ENCODE measurements at regions of chr3 and their contacts with region 1.

Region 1: DNA sequence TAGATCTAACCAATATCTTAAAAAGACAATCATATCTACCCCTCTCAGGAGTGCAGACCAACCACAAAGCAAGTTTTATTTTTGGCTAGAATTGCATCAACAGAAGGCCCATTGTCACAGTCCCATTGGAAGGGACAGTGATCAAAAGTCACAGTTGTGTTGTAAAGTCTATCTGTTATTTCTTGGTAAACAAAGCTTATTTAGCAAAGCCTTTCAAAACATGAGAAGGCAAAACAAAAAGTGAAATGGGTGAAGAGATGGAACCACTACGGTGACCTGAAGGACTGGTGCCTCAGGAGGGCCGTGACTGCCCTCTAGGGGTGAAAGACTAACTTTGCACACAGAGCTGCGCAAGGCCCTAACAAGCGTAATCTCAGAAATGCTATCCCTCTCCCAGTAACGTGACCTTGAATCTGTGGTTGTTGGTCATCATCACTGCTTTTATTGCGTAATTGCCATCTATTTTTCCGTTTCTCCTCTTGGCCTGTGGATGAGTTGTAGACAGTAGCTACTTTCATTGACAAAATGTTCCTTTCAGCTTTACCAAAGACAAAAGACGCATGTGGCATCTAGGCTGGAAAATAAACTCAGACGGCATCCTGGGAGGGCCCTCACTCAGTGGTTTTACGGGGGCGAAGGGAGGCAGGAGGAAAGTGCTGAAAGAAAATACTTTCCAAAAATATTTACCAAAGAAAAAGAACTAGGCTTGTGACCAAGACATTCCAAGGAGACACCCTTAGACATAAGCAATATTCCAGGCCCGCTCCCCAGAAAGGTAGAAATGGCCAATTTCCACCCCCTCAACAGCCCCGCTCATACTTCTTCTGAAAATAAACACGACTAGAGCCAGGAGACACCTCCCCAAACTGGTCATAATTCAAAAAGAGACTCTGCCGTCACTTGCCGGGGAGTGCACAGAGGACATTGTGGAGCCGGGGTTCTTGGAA is 79.4 kb downstream of the FRMD4B start:
- DNase-seq: peak; percentile 85
- H3K4me3 ChIP-seq: no peak overlapping the region
- H3K27ac ChIP-seq: no peak overlapping the region
- H3K4me1 ChIP-seq: peaks cover 12% of the 10 kb centered on the region
- H3K27me3 ChIP-seq: no peaks in the 10 kb centered on the region
- CTCF ChIP-seq: peak; percentile 89 to 92
- POLR2A ChIP-seq: no peak

Region 2: GRCh38 chr3:69129531-69129930 is 177.0 kb before region 1 on chr3:
- CTCF ChIA-PET with region 1: interaction called, 16 read pairs
- POLR2A ChIA-PET with region 1: no interaction called
- dilution Hi-C with region 1: no loop called
- intact Hi-C with region 1: no loop called
- DNase-seq: no peak
- H3K4me3 ChIP-seq: no peak overlapping the region
- H3K27ac ChIP-seq: no peak overlapping the region
- H3K4me1 ChIP-seq: no peaks in the 10 kb centered on the region
- H3K27me3 ChIP-seq: no peaks in the 10 kb centered on the region
- CTCF ChIP-seq: no peak
- POLR2A ChIP-seq: no peak

Region 3: GRCh38 chr3:69200384-69201068 is 106.0 kb before region 1 on chr3:
- CTCF ChIA-PET with region 1: interaction called, 17 read pairs
- POLR2A ChIA-PET with region 1: no interaction called
- dilution Hi-C with region 1: no loop called
- intact Hi-C with region 1: no loop called
- DNase-seq: peak; percentile 94
- H3K4me3 ChIP-seq: peak overlapping the region in 2 of 3 experiments; percentile 48 to 88
- H3K27ac ChIP-seq: peak overlapping the region; percentile 88
- H3K4me1 ChIP-seq: peaks cover 56% of the 10 kb centered on the region
- H3K27me3 ChIP-seq: no peaks in the 10 kb centered on the region
- CTCF ChIP-seq: no peak
- POLR2A ChIP-seq: no peak

Region 4: DNA sequence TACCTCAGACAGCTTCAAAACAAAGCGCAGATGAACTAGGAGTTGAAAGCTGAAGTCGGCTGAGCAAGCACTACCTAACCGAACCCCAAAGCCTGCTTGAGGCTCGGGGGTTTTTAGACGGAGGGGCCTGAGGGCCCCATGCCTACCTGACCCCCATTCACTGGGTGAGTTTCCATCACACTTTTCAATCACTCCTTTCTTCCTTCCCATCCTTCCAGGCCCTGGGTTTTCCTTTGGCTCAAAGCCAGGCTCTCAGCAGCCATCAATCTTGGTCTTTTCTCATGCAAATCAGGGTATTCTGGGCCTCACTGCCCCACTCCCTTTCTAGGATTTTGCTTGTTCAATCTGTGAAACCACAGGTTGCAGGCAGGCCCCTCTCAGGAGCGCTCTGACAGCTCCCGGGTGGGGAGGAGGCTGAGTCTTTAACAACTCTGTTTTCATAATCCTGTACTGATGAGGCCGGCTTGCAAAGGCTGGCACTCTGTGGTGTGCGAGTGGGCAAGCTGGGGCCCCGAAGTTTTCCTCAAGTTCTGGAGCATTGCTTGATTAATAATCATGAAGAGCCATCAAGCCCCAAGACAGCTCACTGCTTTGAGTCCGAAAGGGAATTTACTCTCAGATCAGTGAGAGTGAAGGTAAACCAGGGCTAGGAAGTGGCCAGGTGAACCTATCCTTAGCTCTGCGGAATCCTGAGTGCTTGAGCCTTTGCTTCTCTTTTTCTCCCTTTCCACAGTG is 18.2 kb before region 1 on chr3:
- CTCF ChIA-PET with region 1: interaction called, 39 read pairs
- POLR2A ChIA-PET with region 1: no interaction called
- dilution Hi-C with region 1: no loop called
- intact Hi-C with region 1: no loop called
- DNase-seq: peak; percentile 21
- H3K4me3 ChIP-seq: no peak overlapping the region
- H3K27ac ChIP-seq: peak overlapping the region; percentile 56
- H3K4me1 ChIP-seq: peaks cover 32% of the 10 kb centered on the region
- H3K27me3 ChIP-seq: no peaks in the 10 kb centered on the region
- CTCF ChIP-seq: no peak
- POLR2A ChIP-seq: no peak

Region 5: GRCh38 chr3:69368129-69368741 is 61.7 kb after region 1 on chr3:
- CTCF ChIA-PET with region 1: interaction called, 14 read pairs
- POLR2A ChIA-PET with region 1: no interaction called
- dilution Hi-C with region 1: no loop called
- intact Hi-C with region 1: no loop called
- DNase-seq: peak; percentile 25
- H3K4me3 ChIP-seq: no peak overlapping the region
- H3K27ac ChIP-seq: no peak overlapping the region
- H3K4me1 ChIP-seq: peaks cover 31% of the 10 kb centered on the region
- H3K27me3 ChIP-seq: no peaks in the 10 kb centered on the region
- CTCF ChIP-seq: no peak
- POLR2A ChIP-seq: no peak

Region 6: DNA sequence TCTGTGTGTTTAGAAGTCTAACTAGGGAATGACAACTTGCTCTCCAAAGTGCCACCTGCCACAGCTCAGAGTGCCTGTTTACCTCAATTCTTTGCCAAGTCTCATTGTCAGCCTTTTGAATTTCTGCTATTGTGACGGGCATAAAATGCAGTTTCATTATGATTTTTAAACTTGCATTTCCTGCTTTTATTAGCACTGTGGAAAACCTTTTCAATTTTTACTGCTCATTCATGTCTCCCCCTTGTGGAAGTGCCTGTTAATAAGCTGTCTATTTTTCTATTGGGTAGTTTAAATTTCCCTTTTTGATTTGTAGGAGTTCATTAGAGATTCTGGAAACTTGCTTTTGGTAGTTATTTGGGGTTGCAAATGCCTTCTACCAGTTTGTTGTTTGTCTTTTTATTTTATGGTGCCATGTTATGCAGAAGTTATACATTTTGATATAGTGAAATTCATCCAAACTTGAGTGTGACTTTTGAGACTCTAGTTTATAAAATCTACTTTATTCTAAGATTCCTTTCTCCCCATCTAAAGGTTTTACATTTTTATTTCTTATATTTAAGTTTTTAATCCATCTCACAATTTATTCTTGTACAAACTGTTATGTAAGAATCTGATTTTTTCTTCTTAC is 133.2 kb after region 1 on chr3:
- CTCF ChIA-PET with region 1: interaction called, 14 read pairs
- POLR2A ChIA-PET with region 1: no interaction called
- dilution Hi-C with region 1: no loop called
- intact Hi-C with region 1: no loop called
- DNase-seq: peak; percentile 61
- H3K4me3 ChIP-seq: no peak overlapping the region
- H3K27ac ChIP-seq: no peak overlapping the region
- H3K4me1 ChIP-seq: no peaks in the 10 kb centered on the region
- H3K27me3 ChIP-seq: no peaks in the 10 kb centered on the region
- CTCF ChIP-seq: peak; percentile 41 to 58
- POLR2A ChIP-seq: no peak

Measured in endothelial cell of umbilical vein (primary cell).